ENCODE measurements at regions of chr22 and their contacts with region 1.

Region 1: GRCh38 chr22:42662114-42663021 is 13.2 kb upstream of the CYB5R3 start:
- DNase-seq: peak; percentile 92
- ATAC-seq: peak; percentile 89

Region 2: GRCh38 chr22:42717197-42717928 is 55.0 kb after region 1 on chr22:
- intact Hi-C with region 1: loop called (anchors 5 kb)
- DNase-seq: no peak
- ATAC-seq: no peak

Region 3: DNA sequence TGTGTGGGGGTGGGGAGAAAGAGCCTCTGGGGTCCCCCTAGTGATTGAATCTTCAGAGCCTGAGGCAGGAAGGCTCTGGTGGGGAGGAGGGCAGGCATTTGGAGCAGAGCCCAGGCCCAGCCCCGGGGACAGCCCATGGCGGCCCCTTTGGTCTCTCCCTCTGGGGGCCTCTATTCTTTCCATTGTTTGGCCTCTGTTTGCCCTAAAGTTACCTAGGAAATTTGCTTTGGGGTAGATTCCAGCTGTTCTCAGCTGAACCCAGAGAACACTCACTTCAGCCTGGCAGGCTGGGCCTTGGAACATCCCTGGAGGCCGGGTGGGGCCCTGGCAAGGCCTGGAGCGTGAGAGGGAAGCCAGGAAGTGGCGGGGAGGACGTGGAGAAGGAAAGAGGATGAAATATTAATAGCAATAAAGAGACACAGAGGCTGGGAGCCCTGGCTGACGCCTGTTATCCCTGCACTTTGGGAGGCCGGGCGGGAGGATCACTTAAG is 81.2 kb after region 1 on chr22:
- intact Hi-C with region 1: no loop called
- DNase-seq: peak; percentile 94
- ATAC-seq: peak; percentile 92